Left cardiac atrium (tissue), 4 donors: ENCODE measurements at regions of chr17 and their contacts with region 1.

Region 1: GRCh38 chr17:80876950-80877728 is 114.5 kb upstream of the CHMP6 start:
- DNase-seq: peak; percentile 9
- ATAC-seq: no peak

Region 2: GRCh38 chr17:80169784-80170500 is 707.2 kb before region 1 on chr17 and contains the start of gene CARD14:
- intact Hi-C with region 1: no loop called
- DNase-seq: no peak
- ATAC-seq: no peak
- total RNA-seq, gene CARD14: not detected

Region 3: GRCh38 chr17:80732268-80732667 is 144.9 kb before region 1 on chr17:
- intact Hi-C with region 1: no loop called
- DNase-seq: no peak
- ATAC-seq: no peak

Region 4: GRCh38 chr17:80811181-80812105 is 65.7 kb before region 1 on chr17:
- intact Hi-C with region 1: no loop called
- DNase-seq: no peak
- ATAC-seq: no peak

Region 5: GRCh38 chr17:80959330-80960036 is 82.3 kb after region 1 on chr17:
- intact Hi-C with region 1: loop called in 1 of 2 experiments (anchors 10 kb)
- DNase-seq: peak; percentile 91
- ATAC-seq: peak; percentile 94